ENCODE measurements at regions of chr6 and their contacts with region 1.

Region 1: DNA sequence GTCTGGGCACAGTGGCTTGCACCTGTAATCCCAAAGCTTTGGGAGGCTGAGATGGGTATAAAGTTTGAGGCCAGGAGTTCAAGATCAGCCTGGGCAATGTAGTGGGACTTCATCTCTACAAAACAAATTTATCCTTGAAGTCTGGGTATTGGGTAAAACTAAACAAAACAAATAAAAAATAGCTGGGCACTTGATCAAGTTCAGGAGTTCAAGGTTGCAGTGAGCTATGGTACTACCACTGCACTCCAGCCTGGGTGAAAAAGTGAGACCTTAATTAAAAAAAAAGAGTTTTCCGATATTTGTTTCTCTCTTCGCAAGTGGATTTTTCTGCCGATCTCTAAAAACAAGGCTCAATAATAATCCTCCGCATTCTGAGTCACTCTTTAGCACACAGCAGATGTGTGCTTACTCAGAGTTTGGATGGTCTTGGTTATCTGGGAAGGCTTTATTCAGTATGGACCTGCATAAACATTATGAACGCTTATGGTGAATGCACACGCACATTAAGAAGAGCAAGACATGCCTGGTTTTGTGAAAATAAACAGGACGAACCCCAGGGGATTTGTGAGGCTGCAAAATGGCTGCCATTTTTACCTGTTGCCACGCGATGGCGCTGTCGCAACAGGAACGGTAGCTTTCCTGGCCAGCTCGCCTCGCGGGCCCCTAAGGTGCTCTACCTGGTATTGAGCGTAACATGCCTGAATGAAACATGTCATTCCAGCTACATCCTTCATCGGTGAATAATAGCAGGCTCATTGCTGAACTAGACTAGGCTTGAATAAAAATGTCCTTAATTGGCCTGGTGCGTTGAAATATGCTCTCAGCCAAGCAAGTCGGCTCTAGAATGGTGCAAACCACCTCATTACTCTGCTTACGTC is 6.0 kb downstream of the OPN5 start:
- DNase-seq: peak; percentile 52
- H3K4me3 ChIP-seq: no peak overlapping the region
- H3K27ac ChIP-seq: no peak overlapping the region
- H3K4me1 ChIP-seq: no peaks in the 10 kb centered on the region
- H3K27me3 ChIP-seq: peaks cover 10 to 14% of the 10 kb centered on the region in 2 experiments
- CTCF ChIP-seq: peak; percentile 76 to 86
- POLR2A ChIP-seq: no peak

Region 2: GRCh38 chr6:47773005-47773404 is 14.9 kb before region 1 on chr6:
- CTCF ChIA-PET with region 1: interaction called, 14 read pairs
- POLR2A ChIA-PET with region 1: no interaction called
- dilution Hi-C with region 1: no loop called
- intact Hi-C with region 1: no loop called
- DNase-seq: no peak
- H3K4me3 ChIP-seq: no peak overlapping the region
- H3K27ac ChIP-seq: no peak overlapping the region
- H3K4me1 ChIP-seq: no peaks in the 10 kb centered on the region
- H3K27me3 ChIP-seq: no peaks in the 10 kb centered on the region
- CTCF ChIP-seq: no peak
- POLR2A ChIP-seq: no peak

Region 3: DNA sequence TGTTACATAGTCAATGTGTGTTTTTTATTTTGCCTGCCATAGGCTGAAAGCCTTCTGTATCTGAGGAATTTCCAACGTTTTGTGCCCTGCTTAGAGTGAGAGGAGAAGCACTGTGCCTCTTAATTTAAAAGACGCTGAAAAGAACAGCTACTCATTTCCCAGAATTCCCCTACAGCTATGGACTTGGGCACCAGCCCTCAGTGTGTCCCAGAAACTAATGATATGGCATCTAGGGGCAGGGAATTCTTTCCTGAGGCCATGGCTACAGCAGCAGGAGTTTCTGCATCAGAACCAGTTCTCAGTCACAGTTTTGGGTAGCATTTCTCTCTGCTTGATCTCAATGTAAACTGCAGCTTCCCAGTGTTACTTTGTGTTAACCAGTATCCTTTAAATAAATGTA is 14.1 kb after region 1 on chr6:
- CTCF ChIA-PET with region 1: interaction called, 23 read pairs
- POLR2A ChIA-PET with region 1: no interaction called
- dilution Hi-C with region 1: no loop called
- intact Hi-C with region 1: no loop called
- DNase-seq: no peak
- H3K4me3 ChIP-seq: no peak overlapping the region
- H3K27ac ChIP-seq: no peak overlapping the region
- H3K4me1 ChIP-seq: no peaks in the 10 kb centered on the region
- H3K27me3 ChIP-seq: peaks cover 0 to 1% of the 10 kb centered on the region in 2 experiments
- CTCF ChIP-seq: no peak
- POLR2A ChIP-seq: no peak

Region 4: DNA sequence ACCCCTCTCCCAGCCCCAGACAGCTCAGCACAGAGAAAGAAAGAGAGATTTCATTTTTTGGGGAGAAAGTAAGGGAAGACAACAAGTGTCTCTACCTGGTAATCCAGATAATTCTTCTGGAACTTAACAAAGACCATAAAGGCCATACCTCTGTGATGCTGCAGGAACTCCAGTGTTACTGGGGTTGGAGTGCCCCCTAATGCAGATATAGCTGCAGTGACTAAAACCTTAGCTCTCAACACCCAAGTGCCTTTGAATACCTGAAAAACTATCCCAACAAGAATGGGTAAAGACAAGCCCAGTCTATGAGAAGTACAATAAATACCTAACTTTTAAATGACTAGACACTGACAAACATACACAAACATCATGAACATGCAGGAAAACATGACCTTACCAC is 688.4 kb after region 1 on chr6:
- CTCF ChIA-PET with region 1: interaction called, 99 read pairs
- POLR2A ChIA-PET with region 1: no interaction called
- dilution Hi-C with region 1: no loop called
- intact Hi-C with region 1: loop called (anchors 1 kb)
- DNase-seq: peak; percentile 45
- H3K4me3 ChIP-seq: no peak overlapping the region
- H3K27ac ChIP-seq: no peak overlapping the region
- H3K4me1 ChIP-seq: no peaks in the 10 kb centered on the region
- H3K27me3 ChIP-seq: no peaks in the 10 kb centered on the region
- CTCF ChIP-seq: peak; percentile 6 to 37
- POLR2A ChIP-seq: no peak

Region 5: GRCh38 chr6:48765352-48765961 is 977.6 kb after region 1 on chr6:
- CTCF ChIA-PET with region 1: interaction called, 202 read pairs
- POLR2A ChIA-PET with region 1: interaction called, 3 read pairs
- dilution Hi-C with region 1: no loop called
- intact Hi-C with region 1: loop called (anchors 1 kb)
- DNase-seq: peak; percentile 74
- H3K4me3 ChIP-seq: no peak overlapping the region
- H3K27ac ChIP-seq: no peak overlapping the region
- H3K4me1 ChIP-seq: peaks cover 3% of the 10 kb centered on the region
- H3K27me3 ChIP-seq: no peaks in the 10 kb centered on the region
- CTCF ChIP-seq: peak; percentile 49 to 50
- POLR2A ChIP-seq: no peak

Region 6: GRCh38 chr6:49423817-49424216 is 1636.0 kb after region 1 on chr6:
- CTCF ChIA-PET with region 1: interaction called, 18 read pairs
- POLR2A ChIA-PET with region 1: no interaction called
- dilution Hi-C with region 1: no loop called
- intact Hi-C with region 1: loop called (anchors 1 kb)
- DNase-seq: peak; percentile 14
- H3K4me3 ChIP-seq: no peak overlapping the region
- H3K27ac ChIP-seq: no peak overlapping the region
- H3K4me1 ChIP-seq: no peaks in the 10 kb centered on the region
- H3K27me3 ChIP-seq: no peaks in the 10 kb centered on the region
- CTCF ChIP-seq: no peak
- POLR2A ChIP-seq: no peak